ENCODE measurements at regions of chr15 and their contacts with region 1.

Region 1: DNA sequence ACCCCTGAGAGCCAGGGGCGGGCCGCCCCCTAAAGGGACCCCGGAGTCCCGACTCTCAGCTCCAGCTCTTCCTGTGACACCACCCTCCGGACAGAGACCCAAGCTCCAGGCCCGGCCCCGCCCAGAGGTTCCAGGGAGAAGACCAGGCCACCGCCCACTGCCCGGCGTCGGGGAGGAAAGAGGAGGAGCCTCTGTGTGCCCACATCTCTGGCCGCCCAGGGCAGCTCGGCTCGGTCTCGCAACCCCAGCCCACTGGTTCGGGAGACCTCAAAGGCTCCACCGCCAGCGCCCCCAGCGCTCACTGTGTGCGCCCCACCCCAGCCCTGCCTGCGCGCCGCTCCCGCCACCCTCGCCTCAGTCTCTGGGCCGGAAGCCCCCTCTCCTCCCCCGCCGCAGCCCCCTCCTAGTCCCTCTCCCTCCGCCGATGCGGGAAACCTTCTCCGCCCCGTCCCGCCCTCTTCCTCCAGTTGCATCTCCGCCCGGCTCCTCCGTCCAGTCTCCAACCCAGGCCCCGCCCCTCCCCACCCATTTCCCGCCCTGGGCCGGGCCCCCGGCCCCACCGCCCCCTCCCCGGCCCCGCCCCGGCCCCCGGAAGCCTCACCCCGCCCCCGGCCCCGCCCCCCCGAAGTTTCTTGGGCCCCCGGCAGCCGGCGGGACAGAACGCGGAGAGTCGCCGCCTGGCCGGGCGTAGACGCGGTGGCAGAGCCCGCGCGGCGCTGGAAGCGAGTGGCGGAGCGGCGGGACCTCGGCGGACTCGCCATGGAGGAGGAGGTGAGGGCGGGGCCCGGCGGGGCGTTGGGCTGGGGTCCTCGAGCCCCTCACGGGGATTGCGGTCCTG is at the start of gene PLEKHO2:
- DNase-seq: peak; percentile 96 to 97
- ATAC-seq: peak; percentile 87 to 92 (median 89)
- H3K4me3 ChIP-seq: peak within 1 kb of the TSS; percentile 93
- H3K27ac ChIP-seq: peak within 1 kb of the TSS; percentile 91
- H3K4me1 ChIP-seq: peaks cover 6% of the 10 kb centered on the region
- H3K27me3 ChIP-seq: no peaks in the 10 kb centered on the region
- CTCF ChIP-seq: peak; percentile 5
- total RNA-seq, gene PLEKHO2: 5.2 to 6.7 (median 6.2) TPM

Region 2: GRCh38 chr15:64895285-64896065 is 54.0 kb after region 1 on chr15:
- intact Hi-C with region 1: loop called (anchors 5 kb)
- DNase-seq: peak in 1 of 2 donors; percentile 32
- ATAC-seq: no peak
- H3K4me3 ChIP-seq: peak overlapping the region; percentile 22
- H3K27ac ChIP-seq: peak overlapping the region; percentile 46
- H3K4me1 ChIP-seq: peaks cover 27% of the 10 kb centered on the region
- H3K27me3 ChIP-seq: no peaks in the 10 kb centered on the region
- CTCF ChIP-seq: no peak

Region 3: GRCh38 chr15:64938192-64938591 is 96.7 kb after region 1 on chr15:
- intact Hi-C with region 1: no loop called
- DNase-seq: no peak
- ATAC-seq: no peak
- H3K4me3 ChIP-seq: no peak overlapping the region
- H3K27ac ChIP-seq: no peak overlapping the region
- H3K4me1 ChIP-seq: no peaks in the 10 kb centered on the region
- H3K27me3 ChIP-seq: no peaks in the 10 kb centered on the region
- CTCF ChIP-seq: no peak

Measured in psoas muscle (tissue), 8 donors.